OCI-LY7 (cell line): ENCODE measurements at regions of chrX and their contacts with region 1.

Region 1: GRCh38 chrX:50536955-50537354 is 66.3 kb upstream of the DGKK start:
- DNase-seq: peak; percentile 1
- H3K4me3 ChIP-seq: no peak overlapping the region
- H3K27ac ChIP-seq: no peak overlapping the region
- H3K4me1 ChIP-seq: no peaks in the 10 kb centered on the region
- CTCF ChIP-seq: no peak

Region 2: DNA sequence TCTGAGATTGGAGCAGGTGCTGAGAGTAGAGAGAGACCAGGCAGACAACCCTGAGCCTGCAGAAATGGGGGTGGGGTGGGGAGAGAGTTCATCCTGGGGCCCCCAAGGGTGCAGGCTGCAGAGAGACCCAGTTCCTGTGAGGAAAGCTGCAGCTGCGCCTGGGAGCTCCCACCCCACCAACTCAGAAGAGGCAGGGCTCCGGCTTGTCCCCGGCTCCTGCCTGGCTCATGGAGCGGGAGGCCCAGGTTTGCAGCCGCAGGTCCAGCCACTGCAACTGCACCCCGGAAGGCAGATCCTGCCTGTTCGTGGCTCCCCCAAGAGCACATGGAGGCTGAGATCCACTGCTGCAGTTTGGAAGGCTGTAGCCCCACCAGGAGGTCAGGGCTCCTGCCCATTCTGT is 22.1 kb before region 1 on chrX:
- CTCF ChIA-PET with region 1: no interaction called
- POLR2A ChIA-PET with region 1: no interaction called
- intact Hi-C with region 1: loop called (anchors 2 kb)
- DNase-seq: no peak
- H3K4me3 ChIP-seq: no peak overlapping the region
- H3K27ac ChIP-seq: no peak overlapping the region
- H3K4me1 ChIP-seq: no peaks in the 10 kb centered on the region
- CTCF ChIP-seq: no peak